ENCODE measurements at regions of chr4 and their contacts with region 1.

Region 1: DNA sequence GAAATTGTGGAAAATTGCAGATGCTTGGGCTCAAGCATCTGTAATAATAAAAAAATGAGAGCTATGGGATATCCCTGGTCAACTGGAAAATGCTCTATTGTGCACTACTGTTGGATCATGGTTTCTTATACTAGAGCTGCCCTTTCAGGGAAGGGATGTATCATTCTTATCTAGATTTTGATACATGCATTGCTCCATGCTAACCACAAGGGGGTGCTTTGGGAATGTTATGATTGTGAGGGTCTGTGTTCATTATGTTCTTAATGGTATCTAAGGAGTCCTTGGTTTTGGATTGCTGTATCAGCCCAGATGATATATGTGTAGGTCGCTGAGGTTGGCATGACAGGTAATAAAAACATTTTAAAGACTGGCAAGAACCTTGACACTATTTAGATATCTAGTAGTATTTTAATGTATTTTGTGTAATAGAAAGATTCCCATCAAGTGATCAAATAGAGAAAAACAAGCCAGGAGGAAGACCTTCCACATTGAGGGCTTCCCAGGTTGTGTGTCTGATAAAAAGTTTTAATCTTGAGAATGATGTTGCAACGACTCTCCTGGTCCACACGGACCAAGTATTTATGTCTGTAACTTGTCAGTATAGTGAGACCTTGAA is 49.2 kb upstream of the TLR2 start:
- DNase-seq: no peak
- ATAC-seq: peak; percentile 54 to 74 (median 68)
- H3K4me3 ChIP-seq: no peak overlapping the region
- H3K27ac ChIP-seq: no peak overlapping the region
- H3K4me1 ChIP-seq: no peaks in the 10 kb centered on the region
- H3K27me3 ChIP-seq: no peaks in the 10 kb centered on the region
- CTCF ChIP-seq: peak; percentile 51 to 64 (median 57)
- POLR2A ChIP-seq: no peak

Region 2: GRCh38 chr4:153750197-153750817 is 115.5 kb after region 1 on chr4:
- intact Hi-C with region 1: loop called in 1 of 2 experiments (anchors 10 kb)
- DNase-seq: peak in 1 of 3 donors; percentile 75
- ATAC-seq: peak; percentile 93 to 97 (median 95)
- H3K4me3 ChIP-seq: no peak overlapping the region
- H3K27ac ChIP-seq: no peak overlapping the region
- H3K4me1 ChIP-seq: no peaks in the 10 kb centered on the region
- H3K27me3 ChIP-seq: no peaks in the 10 kb centered on the region
- CTCF ChIP-seq: peak; percentile 71 to 76 (median 73)
- POLR2A ChIP-seq: no peak

Region 3: DNA sequence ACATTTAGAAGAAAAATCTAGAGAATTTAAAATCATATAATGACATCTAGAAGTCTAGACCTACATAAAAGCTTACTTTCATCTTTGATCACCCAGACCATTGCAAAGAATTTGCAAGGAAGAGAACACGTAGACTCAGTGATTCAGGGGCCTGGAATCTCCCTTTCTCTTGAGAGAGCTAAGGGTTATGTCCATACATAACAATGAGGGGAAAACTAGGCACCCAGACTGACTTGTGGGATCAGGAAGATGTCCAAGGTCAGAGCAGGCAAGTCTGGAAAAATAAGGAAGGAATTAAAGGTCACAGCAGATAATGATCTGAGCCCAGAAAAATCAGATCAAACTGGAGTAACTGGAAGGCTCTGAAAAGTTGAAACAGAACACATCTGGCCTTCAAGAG is 352.4 kb after region 1 on chr4:
- intact Hi-C with region 1: no loop called
- DNase-seq: no peak
- ATAC-seq: no peak
- H3K4me3 ChIP-seq: no peak overlapping the region
- H3K27ac ChIP-seq: no peak overlapping the region
- H3K4me1 ChIP-seq: no peaks in the 10 kb centered on the region
- H3K27me3 ChIP-seq: no peaks in the 10 kb centered on the region
- CTCF ChIP-seq: no peak
- POLR2A ChIP-seq: no peak

Measured in right lobe of liver (tissue), 6 donors.